Activated CD8-positive, alpha-beta memory T cell treated with anti-CD3 and anti-CD28 coated beads, Interleukin-2, amount 10 ng/mL, durations not matched to agents 7 days and 5 days (primary cell): ENCODE measurements at regions of chr22 and their contacts with region 1.

Region 1: DNA sequence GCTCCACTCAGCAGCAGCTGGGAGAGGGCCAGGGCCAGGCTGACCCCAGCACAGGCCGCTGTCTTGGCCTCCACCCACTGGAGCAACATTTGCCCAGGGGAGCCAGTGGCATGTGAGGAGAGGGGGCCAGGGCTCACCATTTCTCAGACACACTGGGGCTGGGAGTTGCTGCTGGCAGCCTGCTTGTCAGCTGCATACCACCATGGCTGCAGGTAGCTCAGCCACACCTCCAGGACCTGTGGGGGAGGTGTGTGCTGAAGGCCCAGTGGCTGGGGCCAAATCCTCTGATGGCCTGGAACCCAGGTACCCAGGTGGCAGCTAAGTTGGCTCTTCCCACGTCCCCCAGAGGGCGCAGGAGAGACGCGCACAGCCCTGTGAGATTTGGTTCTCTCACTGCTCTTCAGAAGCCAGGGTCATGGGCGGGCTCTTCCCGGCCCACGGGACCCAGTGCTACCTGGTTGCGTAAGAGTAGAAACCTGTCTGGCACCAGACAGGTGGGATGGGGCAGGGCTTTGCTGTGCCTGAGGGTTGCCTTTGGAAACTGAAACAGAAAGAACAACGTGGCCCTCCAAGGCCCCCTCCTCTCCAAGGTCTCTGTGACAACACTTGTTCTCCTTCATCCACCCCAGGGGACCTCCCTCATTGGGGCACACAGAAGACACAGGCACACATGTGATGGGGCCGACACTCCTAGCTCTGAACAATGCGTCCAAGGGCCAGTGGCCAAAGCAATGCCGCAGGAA is 98.8 kb downstream of the MED15 start:
- DNase-seq: peak; percentile 78
- ATAC-seq: peak; percentile 89
- H3K4me3 Mint-ChIP-seq: no peak overlapping the region
- H3K27ac Mint-ChIP-seq: no peak overlapping the region
- H3K4me1 Mint-ChIP-seq: peaks cover 10% of the 10 kb centered on the region
- H3K27me3 Mint-ChIP-seq: no peaks in the 10 kb centered on the region

Region 2: DNA sequence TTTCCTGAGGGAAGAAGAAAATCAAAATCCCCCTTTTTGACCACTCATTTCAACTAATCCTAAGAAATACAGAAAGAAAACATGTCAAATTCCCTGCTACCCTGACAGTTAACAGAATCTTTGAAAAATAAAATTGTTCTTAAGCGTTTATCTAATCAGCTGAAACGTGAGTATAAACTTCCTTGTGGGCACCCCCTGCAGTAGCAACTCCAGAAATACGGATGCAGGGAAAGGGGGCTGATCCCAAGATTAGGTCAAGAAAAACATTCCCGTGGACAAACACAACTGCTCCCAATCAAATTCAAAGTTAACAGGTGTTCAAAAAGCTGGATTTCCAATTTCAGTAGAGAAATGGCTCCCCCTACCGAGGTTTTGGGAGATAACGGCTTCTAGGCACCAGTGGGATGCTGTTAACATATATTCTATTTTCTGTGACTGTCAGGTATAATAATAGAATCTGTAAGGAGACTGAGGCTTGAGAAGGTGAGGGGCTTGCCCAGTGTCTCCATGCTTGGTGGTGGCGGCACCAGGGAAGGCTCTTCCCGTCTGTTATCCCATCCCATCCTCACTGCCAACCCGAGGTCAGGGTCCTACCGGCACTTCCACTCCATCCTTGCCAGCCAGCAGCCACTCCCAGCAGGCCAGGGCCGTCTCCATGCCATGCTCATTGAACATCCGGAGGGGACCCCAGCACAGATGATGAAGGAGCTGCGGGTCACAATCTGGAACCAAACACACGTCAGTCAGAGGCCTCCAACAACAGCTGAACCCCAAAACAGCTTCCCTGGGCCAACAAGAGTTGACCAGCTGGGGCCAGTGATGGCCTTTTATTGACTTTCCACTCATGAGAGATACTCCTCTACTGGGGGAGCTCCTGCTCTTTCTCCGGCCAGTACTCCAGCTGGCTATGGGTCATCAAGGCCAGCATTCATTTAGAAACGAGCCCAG is 135.7 kb after region 1 on chr22:
- CTCF ChIA-PET with region 1: interaction called, 11 read pairs
- DNase-seq: peak; percentile 50
- ATAC-seq: no peak
- H3K4me3 Mint-ChIP-seq: no peak overlapping the region
- H3K27ac Mint-ChIP-seq: no peak overlapping the region
- H3K4me1 Mint-ChIP-seq: peaks cover 3% of the 10 kb centered on the region
- H3K27me3 Mint-ChIP-seq: no peaks in the 10 kb centered on the region